OCI-LY7 (cell line): ENCODE measurements at regions of chr7 and their contacts with region 1.

Region 1: GRCh38 chr7:106041140-106041717 is 70.9 kb downstream of the SYPL1 start:
- DNase-seq: peak; percentile 72
- H3K4me3 ChIP-seq: no peak overlapping the region
- H3K27ac ChIP-seq: no peak overlapping the region
- H3K4me1 ChIP-seq: peaks cover 9% of the 10 kb centered on the region
- CTCF ChIP-seq: peak; percentile 86

Region 2: DNA sequence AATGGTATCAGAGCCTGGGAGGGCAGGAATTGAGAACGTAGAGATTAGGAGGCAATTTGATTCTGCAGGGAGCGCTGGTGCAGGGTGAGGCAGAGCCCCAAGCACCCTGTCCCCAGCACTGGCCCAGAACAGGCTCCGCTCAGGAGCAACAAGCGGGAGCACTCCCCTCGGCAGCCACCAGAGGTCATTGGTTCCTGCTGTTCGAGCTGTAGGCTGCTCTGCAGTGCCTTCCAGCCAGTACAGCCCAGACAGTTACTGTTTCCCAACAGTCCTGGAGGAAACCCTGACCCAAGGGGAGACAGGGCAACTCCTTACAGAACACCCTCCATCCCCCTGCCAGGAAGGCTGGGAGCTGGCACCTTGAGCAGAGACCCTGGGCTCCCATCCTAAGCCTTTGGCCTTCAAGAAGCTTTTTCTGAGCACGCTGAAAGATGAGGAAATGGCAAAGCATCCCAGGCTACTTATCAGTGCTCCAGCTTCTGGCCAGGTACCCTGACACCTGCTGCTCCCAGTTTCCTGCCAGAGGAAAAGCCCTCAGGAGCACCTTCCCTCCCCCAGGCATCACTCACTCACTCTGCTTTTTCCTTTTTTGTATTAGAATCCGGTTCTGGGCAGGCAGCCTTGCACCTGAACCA is 388.8 kb before region 1 on chr7:
- CTCF ChIA-PET with region 1: interaction called, 9 read pairs
- POLR2A ChIA-PET with region 1: no interaction called
- intact Hi-C with region 1: loop called (anchors 1 kb)
- DNase-seq: peak; percentile 71
- H3K4me3 ChIP-seq: no peak overlapping the region
- H3K27ac ChIP-seq: no peak overlapping the region
- H3K4me1 ChIP-seq: no peaks in the 10 kb centered on the region
- CTCF ChIP-seq: peak; percentile 84

Region 3: DNA sequence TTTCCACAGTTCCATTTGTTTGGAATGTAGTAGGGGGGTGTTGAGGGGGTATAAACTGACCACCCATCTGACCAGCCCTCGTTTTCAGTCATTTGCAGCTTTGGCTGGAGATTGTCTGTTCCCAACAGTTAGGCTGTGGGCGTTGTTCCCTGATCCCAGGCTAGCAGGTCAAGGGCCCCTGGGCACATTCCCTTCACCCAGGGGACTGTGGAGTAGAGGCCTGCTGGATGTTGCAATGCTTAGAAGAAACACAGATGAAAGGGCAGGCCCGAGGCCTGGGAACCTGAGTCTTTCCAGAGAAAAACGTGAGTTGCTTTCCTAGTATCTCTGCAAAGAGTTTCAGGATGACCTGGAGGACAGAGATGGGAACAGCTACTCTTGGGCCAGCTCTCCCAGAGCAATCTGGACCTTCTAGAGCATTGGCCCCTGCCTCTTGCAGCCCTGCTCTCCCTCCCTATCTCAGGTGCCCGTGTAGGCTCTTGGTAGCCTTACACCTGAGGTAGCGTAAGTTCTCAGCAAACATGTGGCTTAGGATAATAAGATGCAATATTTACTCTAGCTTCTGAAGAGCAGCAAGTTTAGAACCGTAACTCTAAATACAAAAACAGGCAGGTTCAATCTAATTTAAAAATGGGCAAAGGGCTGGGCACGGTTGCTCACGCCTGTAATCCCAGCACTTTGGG is 360.6 kb before region 1 on chr7:
- CTCF ChIA-PET with region 1: no interaction called
- POLR2A ChIA-PET with region 1: no interaction called
- intact Hi-C with region 1: loop called (anchors 10 kb)
- DNase-seq: no peak
- H3K4me3 ChIP-seq: no peak overlapping the region
- H3K27ac ChIP-seq: no peak overlapping the region
- H3K4me1 ChIP-seq: peaks cover 8% of the 10 kb centered on the region
- CTCF ChIP-seq: no peak

Region 4: DNA sequence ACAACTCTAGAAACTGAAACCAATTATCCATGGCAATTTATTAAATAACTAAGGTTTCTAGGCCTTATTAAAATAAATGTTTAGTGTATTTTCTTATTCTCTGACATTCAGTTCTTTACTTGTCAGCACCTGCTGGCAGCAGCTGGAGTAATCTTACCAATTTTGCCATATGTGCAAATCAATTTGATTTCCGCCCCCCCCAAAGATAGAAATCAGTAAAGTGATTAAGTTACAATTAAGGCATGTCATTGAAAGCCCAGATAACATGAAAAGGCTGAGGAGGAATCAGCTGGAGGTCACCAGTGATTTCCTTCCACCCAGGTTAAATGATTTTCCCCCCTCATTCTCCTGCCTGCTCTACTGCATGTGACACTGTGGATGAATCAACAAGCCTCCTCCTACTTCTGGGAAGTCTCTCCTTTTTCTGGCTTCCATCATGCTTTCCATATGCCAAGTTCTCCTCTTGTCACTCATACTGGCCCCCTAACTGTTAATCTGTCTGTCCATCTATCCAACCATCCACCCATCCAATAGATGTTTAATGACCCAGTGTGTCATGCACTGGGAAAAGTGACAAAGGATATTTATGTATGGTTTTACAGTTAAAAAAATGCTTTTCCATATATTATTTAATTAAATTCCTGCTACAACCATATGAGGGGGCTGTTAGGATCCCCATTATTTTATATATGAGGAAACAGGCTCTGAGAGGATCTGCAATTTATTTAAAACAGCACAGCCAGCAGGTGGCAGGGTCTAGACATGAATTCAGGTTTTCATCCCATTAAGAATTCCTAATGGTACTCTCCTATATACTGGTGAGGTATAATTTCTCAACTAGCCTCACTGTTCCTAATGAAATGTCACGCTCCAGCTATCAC is 281.3 kb before region 1 on chr7:
- CTCF ChIA-PET with region 1: interaction called, 4 read pairs
- POLR2A ChIA-PET with region 1: no interaction called
- intact Hi-C with region 1: loop called (anchors 1 kb)
- DNase-seq: peak; percentile 33
- H3K4me3 ChIP-seq: no peak overlapping the region
- H3K27ac ChIP-seq: no peak overlapping the region
- H3K4me1 ChIP-seq: no peaks in the 10 kb centered on the region
- CTCF ChIP-seq: peak; percentile 85

Region 5: DNA sequence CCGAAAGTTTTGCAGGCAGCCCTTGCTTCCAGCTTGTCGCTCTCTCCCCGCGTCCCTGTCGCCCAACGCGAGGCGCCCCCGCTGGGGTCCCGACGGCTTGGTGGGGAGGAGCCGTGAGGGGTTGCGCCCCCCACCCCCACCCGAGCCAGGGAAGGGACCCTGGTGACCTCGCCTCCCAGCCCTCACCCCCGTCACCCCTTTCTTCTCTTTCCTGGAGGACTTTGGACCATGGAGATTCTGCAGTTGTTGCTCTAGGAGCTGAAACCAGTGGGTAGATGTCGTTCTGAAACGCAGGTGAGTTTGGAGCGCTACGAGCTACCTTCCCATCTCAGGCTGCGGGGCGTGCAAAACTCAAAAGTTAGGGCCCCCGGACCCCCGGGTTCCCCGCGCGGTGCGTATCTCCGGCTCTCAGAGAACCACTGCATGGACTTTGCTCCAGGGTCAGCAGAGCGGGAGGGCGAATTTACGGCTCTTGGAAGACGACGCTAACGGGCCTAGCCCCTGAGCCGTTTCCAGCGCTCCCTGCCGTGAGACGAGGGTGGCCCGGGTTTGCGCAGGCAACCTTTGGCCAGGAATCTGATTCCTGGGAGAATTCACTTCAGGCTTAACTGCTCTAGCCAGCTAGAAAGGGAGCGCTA is 164.1 kb before region 1 on chr7:
- CTCF ChIA-PET with region 1: no interaction called
- POLR2A ChIA-PET with region 1: no interaction called
- intact Hi-C with region 1: no loop called
- DNase-seq: no peak
- H3K4me3 ChIP-seq: peak overlapping the region; percentile 44
- H3K27ac ChIP-seq: no peak overlapping the region
- H3K4me1 ChIP-seq: no peaks in the 10 kb centered on the region
- CTCF ChIP-seq: no peak

Region 6: DNA sequence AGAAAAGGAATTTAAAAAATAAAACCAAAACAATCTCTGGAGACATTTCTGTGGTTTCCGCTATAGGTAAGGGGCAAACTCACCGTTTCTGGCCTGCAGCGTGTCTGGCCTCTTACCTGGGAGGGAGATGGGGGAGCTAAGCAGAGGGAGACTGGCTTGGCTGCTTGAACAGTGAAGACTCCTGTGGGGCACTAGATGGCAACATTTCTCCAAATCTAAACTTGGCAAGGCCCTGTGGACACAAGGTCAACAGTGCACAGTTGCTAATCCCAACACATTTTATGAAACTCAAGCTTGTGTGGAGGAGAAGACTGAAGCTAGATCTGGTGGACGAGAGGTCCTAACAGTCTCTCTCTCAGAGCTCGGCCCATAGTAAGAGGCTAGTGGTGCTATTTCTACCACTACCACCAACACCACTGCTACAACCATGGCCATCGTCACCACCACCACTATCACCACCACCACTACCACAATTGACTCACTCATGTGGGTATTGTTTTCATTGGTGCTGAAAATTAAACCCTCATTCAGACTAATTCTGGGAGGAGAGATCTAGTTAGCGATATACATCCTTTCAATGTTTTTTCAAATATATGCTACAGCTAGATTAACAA is 106.5 kb before region 1 on chr7:
- CTCF ChIA-PET with region 1: no interaction called
- POLR2A ChIA-PET with region 1: no interaction called
- intact Hi-C with region 1: loop called (anchors 1 kb)
- DNase-seq: peak; percentile 55
- H3K4me3 ChIP-seq: no peak overlapping the region
- H3K27ac ChIP-seq: no peak overlapping the region
- H3K4me1 ChIP-seq: no peaks in the 10 kb centered on the region
- CTCF ChIP-seq: peak; percentile 72

Region 7: GRCh38 chr7:105996860-105997737 is 44.1 kb before region 1 on chr7:
- CTCF ChIA-PET with region 1: no interaction called
- POLR2A ChIA-PET with region 1: no interaction called
- intact Hi-C with region 1: no loop called
- DNase-seq: no peak
- H3K4me3 ChIP-seq: no peak overlapping the region
- H3K27ac ChIP-seq: no peak overlapping the region
- H3K4me1 ChIP-seq: no peaks in the 10 kb centered on the region
- CTCF ChIP-seq: no peak

Region 8: GRCh38 chr7:106461993-106462859 is 421.0 kb after region 1 on chr7:
- CTCF ChIA-PET with region 1: no interaction called
- POLR2A ChIA-PET with region 1: no interaction called
- intact Hi-C with region 1: loop called (anchors 10 kb)
- DNase-seq: peak; percentile 39
- H3K4me3 ChIP-seq: no peak overlapping the region
- H3K27ac ChIP-seq: no peak overlapping the region
- H3K4me1 ChIP-seq: no peaks in the 10 kb centered on the region
- CTCF ChIP-seq: peak; percentile 83